ENCODE measurements at regions of chr4 and their contacts with region 1.

Region 1: DNA sequence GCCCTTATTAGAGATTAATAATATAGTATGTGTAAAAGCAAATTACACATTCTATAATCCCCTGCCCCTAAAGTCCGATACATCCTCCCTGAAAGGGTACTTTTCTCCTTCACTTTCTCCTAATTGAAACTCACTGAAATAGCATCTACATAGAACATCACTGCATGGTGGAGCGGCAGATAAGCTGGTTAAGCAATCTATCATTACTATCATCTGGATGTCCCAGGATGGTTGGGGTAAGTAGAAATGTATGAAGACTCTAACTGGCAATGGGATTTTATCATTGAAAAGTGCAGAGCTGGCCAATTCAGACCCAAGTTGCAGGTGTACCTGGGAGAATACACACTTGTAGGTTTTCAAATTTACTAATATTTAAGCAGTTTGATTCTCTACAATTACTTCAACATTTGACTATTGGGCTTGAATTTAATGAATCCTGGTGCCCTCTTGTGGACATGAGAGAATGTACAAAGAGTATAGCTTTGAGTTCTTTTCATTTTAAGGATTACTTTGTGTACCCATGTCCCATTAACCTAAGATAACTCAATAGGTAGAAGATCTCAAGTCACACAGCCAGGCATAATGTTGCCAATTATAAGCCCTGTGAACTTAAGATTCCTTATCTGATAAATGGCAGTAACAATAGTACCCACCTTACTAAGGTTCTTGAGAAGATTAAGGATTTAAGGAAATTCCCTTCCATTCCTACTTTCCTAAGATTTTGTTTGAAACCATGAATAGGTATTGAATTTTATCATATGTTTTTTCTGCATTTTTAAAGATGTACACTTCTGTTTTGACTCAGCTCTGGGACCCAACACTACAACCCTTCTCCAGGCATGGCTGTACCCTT is 69.8 kb downstream of the SHROOM3 start:
- DNase-seq: peak; percentile 76
- H3K4me3 ChIP-seq: no peak overlapping the region
- H3K27ac ChIP-seq: no peak overlapping the region
- H3K4me1 ChIP-seq: no peaks in the 10 kb centered on the region
- H3K27me3 ChIP-seq: no peaks in the 10 kb centered on the region; the same call in 1 of the 2 replicates

Region 2: DNA sequence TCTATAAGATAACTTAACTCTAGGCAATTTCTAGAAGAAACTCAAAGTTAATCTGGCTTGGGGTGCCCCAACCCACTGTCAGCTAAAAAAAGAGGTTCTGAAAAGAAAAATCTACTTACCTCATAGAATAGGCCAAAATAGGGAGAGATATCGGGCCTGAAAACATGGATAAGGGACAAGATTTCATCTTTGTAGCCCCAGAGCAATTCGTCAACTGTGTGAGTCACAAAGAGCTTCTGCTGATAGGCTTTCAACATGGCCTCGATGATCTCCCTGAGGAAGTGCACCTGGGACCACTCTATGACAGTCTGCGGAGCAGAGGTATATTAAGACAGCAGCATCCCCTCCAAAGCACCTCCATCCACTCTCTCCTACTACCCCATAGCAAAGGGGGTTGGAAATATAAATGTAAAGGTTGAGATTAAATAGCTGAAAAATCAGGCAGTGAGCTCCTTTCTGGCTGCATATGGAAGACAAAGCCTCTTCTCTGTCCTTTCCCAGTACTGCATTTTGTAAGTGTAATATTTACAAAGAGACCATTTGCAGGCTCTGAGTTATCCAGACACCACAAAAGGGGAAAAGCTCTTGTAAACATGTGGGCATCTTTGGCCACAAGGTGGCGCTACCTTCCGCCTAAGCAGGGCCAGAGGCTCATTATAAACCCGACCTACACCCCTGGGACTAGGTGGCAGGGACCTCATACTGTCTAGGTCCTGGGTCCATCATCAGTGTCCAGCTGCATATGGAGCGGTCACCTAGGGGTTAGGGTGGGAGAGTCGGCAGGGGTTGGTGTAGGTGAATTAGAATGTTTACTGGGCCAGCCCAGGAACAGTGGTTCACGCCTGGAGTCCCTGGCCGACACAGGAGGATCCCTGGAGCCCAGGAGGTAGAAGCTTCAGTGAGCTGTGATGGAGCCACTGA is 325.2 kb before region 1 on chr4:
- in situ Hi-C with region 1: loop called (anchors 10 kb)
- DNase-seq: peak; percentile 86
- H3K4me3 ChIP-seq: no peak overlapping the region
- H3K27ac ChIP-seq: no peak overlapping the region
- H3K4me1 ChIP-seq: peaks cover 14% of the 10 kb centered on the region; the same call in 1 of the 2 replicates
- H3K27me3 ChIP-seq: no peaks in the 10 kb centered on the region

Region 3: GRCh38 chr4:76326515-76326914 is 178.3 kb before region 1 on chr4:
- in situ Hi-C with region 1: no loop called
- DNase-seq: no peak
- H3K4me3 ChIP-seq: no peak overlapping the region
- H3K27ac ChIP-seq: no peak overlapping the region
- H3K4me1 ChIP-seq: no peaks in the 10 kb centered on the region
- H3K27me3 ChIP-seq: no peaks in the 10 kb centered on the region; the same call in 1 of the 2 replicates

Region 4: DNA sequence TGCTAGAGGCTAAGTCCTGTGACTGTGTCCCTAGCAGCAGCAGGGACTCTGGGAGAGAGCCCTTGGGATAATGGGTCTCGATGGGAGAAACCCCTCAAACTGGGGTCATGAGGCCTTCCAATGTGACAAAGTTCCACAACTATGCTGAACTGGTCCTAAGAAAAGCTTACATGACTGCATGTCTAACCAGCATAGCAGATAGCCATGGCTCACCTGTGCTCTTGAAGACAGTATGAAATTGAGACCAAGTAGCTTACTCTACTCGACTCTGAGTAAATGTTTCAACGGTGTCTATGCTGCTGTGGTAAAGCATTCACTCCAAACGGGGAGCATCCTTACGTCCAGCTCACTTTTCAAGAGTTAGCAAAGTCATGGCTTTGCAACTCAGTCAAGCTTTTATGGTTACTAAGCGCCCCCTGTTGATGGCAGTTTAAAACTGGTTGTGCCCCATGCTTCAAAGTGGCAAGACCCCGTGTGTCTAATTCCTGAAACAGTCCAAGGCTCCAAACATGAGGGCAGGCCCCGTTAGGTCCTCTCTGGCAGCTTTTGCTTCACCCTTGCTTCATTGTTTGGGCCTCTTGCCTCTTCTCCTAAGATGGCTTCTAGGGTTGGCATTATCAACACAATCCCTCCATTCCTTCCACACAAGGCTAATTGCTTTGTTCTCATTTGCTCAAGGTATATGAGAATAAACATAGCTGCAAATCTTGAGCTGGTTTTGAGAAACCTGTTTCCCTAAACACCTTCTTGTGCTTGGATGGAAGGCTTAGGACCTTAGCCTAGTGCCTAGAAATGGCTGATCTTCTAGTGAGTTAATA is 698.8 kb after region 1 on chr4:
- in situ Hi-C with region 1: loop called (anchors 25 kb)
- DNase-seq: peak; percentile 92
- H3K4me3 ChIP-seq: no peak overlapping the region
- H3K27ac ChIP-seq: no peak overlapping the region
- H3K4me1 ChIP-seq: peaks cover 16% of the 10 kb centered on the region
- H3K27me3 ChIP-seq: no peaks in the 10 kb centered on the region